CD4-positive, alpha-beta memory T cell (primary cell): ENCODE measurements at regions of chr6 and their contacts with region 1.

Region 1: DNA sequence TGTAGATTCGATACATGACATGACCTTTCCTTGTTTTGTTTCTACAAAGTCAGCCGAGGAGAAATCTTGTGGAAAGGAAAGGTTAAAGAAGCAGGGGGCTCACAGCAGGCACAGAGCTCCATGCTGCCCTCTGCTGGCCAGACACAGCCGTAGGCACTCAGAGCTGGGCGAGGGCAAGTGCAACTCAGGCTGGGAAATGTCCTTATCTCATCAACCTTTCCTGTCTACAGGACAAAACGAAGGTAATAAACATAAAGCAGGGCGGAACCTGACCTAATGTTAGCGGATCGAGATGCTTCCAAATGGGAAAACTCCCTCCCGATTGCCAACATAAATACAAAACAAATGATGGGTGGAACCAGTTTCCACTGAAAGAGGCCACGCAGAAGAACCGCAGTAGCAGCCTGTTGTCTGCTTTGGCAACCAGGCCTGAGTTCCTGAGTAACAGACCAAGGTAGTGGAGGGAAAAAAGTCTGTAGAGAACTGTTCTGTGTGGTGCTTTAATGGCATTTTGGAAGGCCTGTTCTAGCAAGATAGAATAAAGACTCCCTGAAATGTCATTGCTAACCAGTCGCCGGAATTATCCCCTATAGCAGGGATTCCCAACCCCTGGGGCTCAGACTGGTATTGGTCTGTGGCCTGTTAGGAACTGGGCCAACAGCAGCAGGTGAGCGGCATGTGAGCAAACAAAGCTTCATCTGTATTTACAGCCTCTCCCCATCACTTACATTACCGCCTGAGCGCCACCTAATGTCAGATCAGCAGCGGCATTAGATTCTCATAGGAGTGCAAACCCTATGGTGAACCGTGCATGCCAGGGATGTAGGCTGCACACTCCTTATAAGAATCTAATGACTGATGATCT is 85.2 kb downstream of the MBOAT1 start:
- DNase-seq: peak in 4 of 5 donors; percentile 27 to 45 (median 32)
- H3K4me3 ChIP-seq: no peak overlapping the region
- H3K4me3 Mint-ChIP-seq: no peak overlapping the region
- H3K27ac ChIP-seq: no peak overlapping the region
- H3K27ac Mint-ChIP-seq: peak overlapping the region in 3 of 7 donors; percentile 3 to 57 (median 38)
- H3K4me1 ChIP-seq: no peaks in the 10 kb centered on the region
- H3K4me1 Mint-ChIP-seq: peaks cover 1 to 10% (median 6%) of the 10 kb centered on the region in 4 donors
- H3K27me3 ChIP-seq: no peaks in the 10 kb centered on the region
- H3K27me3 Mint-ChIP-seq: no peaks in the 10 kb centered on the region

Region 2: DNA sequence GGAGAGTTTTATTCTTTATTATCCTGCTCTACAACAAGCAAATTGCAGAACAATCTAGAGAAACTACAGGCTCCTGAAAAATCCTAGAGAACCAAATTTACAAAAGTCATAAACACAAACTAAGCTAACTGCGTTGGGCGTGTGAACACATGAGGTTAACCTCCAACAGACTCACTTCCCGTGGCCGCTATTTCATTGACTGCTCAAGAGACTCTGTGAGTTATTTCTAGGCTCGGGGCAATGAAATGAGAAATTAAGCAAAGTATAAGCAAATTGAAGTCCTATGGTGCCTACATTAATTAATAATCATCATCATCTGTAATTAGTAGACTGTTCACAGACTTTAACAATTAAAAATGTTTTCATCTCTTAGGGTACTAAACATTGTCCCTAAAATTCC is 14.8 kb before region 1 on chr6:
- CTCF ChIA-PET with region 1: interaction called, 40 read pairs
- POLR2A ChIA-PET with region 1: no interaction called
- intact Hi-C with region 1: no loop called
- DNase-seq: no peak
- H3K4me3 ChIP-seq: no peak overlapping the region
- H3K4me3 Mint-ChIP-seq: no peak overlapping the region
- H3K27ac ChIP-seq: no peak overlapping the region
- H3K27ac Mint-ChIP-seq: peak overlapping the region in 2 of 7 donors; percentile 14 to 51
- H3K4me1 ChIP-seq: no peaks in the 10 kb centered on the region
- H3K4me1 Mint-ChIP-seq: no peaks in the 10 kb centered on the region
- H3K27me3 ChIP-seq: no peaks in the 10 kb centered on the region
- H3K27me3 Mint-ChIP-seq: no peaks in the 10 kb centered on the region

Region 3: GRCh38 chr6:20291764-20292580 is 165.0 kb after region 1 on chr6:
- CTCF ChIA-PET with region 1: no interaction called
- POLR2A ChIA-PET with region 1: no interaction called
- intact Hi-C with region 1: no loop called
- DNase-seq: peak; percentile 55 to 68 (median 61)
- H3K4me3 ChIP-seq: no peak overlapping the region
- H3K4me3 Mint-ChIP-seq: peak overlapping the region in 7 of 8 donors; percentile 4 to 65 (median 34)
- H3K27ac ChIP-seq: no peak overlapping the region
- H3K27ac Mint-ChIP-seq: peak overlapping the region in 4 of 7 donors; percentile 8 to 63 (median 47)
- H3K4me1 ChIP-seq: peaks cover 13% of the 10 kb centered on the region
- H3K4me1 Mint-ChIP-seq: peaks cover 8 to 29% (median 14%) of the 10 kb centered on the region in 4 donors
- H3K27me3 ChIP-seq: no peaks in the 10 kb centered on the region
- H3K27me3 Mint-ChIP-seq: no peaks in the 10 kb centered on the region